Gastrocnemius medialis (tissue), 4 donors: ENCODE measurements at regions of chr2 and their contacts with region 1.

Region 1: DNA sequence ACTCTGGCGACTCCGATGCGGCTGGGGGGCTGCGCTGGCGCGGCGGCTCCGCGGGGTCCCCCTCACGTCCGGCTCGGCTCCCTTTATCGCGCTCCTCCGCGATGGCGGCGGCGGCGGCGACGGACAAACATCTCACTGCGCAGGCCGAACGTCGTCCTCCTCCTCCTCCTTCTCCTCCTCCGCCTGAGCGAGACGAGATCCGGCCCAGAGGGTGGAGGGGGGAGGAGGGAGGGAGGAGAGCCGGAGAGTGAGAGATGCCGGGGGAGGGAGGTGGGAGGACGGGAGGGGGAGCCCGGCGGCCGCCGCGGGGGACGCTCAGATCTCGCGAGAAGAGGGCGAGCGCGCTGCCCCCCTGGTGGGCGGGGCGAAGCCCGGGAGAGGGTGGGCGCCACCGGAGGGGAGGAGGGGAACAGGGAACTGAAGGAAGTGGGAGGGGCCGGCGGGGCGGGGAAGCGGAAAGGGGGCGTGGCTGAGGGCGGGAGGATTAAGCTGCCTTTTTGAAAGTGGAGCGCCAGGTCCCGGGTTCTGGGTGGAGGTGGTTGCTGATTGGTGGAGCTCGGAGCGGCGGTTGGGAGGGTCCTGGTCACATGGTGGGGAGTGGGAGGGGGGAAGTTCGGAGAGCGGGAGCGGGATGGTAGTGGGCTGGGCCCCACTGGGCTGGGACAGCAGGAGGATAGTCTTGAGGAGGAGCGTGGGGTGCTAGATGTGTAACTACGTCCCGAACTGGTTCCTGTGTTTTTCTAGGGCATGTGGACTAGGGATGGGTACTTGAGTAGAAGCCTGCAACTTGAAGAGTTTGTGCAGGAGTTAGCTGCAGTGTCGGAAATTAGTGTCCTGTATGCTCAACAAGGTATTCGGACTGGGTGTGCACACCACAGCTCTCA is at the start of gene CUL3:
- DNase-seq: peak; percentile 98
- ATAC-seq: peak; percentile 90
- H3K4me3 ChIP-seq: peak within 1 kb of the TSS; percentile 61 to 89 (median 80)
- H3K27ac ChIP-seq: peak within 1 kb of the TSS; percentile 91 to 95 (median 93)
- H3K4me1 ChIP-seq: peaks cover 27 to 28% of the 10 kb centered on the region in 2 donors
- H3K27me3 ChIP-seq: no peaks in the 10 kb centered on the region
- CTCF ChIP-seq: no peak
- POLR2A ChIP-seq: peak; percentile 87
- total RNA-seq, gene CUL3: 94.1 to 120 (median 109) TPM

Region 2: DNA sequence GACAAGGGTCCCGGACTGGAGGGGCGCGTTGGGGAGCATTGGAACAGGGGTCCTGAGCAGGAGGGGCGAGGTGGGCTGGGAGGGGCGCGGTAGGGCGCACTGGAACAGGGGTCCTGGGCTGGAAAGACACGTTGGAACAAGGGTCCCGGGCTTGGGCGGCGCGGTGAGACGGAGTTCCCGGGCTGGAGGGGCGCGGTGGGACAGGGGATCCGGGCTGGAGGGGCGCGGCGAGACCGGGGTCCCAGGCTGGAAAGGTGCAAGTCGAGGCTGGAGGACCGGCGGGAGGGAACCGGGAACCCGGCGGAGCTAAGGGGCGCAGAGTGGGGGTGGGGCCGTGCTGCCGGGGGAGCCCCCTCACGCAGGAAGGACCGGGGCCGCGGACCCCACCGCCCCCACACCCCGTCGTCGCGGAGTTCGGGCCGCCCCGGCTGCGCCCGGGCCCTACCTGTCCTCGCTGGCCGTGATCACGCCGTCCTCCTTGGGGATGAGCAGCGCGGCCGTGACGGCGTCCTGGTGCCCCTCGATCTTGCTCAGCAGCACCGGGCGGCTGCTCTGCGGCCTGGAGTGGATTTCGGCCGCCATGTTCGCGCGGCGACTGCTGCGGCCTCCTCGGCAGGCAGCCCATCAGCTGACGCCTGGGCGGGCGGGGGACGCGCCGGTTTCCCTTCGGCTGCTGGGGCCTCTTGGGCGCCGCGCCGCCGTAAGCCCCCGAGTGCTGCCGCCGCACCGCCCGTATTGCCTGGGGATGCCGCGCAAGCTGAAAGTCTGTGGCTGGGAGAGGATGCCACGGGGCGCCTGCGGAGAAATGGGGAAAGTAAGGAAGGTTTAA is 640.5 kb before region 1 on chr2 and contains the start of gene WDFY1:
- in situ Hi-C with region 1: loop called in 2 of 4 experiments (anchors 25 kb)
- intact Hi-C with region 1: loop called (anchors 1 kb)
- DNase-seq: peak; percentile 75 to 83
- ATAC-seq: peak; percentile 74 to 91
- H3K4me3 ChIP-seq: peak within 1 kb of the TSS; percentile 77 to 92 (median 86)
- H3K27ac ChIP-seq: peak within 1 kb of the TSS; percentile 89 to 97 (median 92)
- H3K4me1 ChIP-seq: peaks cover 20 to 27% of the 10 kb centered on the region in 2 donors
- H3K27me3 ChIP-seq: no peaks in the 10 kb centered on the region
- CTCF ChIP-seq: peak in 2 of 5 experiments; percentile 12 to 13
- POLR2A ChIP-seq: peak; percentile 80 to 93
- total RNA-seq, gene WDFY1: 12.0 to 25.7 (median 17.1) TPM

Region 3: GRCh38 chr2:224492531-224492930 is 92.9 kb before region 1 on chr2:
- in situ Hi-C with region 1: no loop called
- intact Hi-C with region 1: loop called (anchors 5 kb)
- DNase-seq: no peak
- ATAC-seq: no peak
- H3K4me3 ChIP-seq: no peak overlapping the region
- H3K27ac ChIP-seq: no peak overlapping the region
- H3K4me1 ChIP-seq: no peaks in the 10 kb centered on the region
- H3K27me3 ChIP-seq: no peaks in the 10 kb centered on the region
- CTCF ChIP-seq: no peak
- POLR2A ChIP-seq: no peak